Thyroid gland (tissue), 4 donors: ENCODE measurements at regions of chr1 and their contacts with region 1.

Region 1: GRCh38 chr1:9573723-9574122 is 15.0 kb upstream of the TMEM201 start:
- DNase-seq: no peak
- H3K4me3 ChIP-seq: no peak overlapping the region
- H3K27ac ChIP-seq: no peak overlapping the region
- H3K4me1 ChIP-seq: peaks cover 0 to 23% of the 10 kb centered on the region in 2 donors
- H3K27me3 ChIP-seq: no peaks in the 10 kb centered on the region
- CTCF ChIP-seq: peak in 4 of 6 experiments; percentile 18 to 72 (median 52)
- POLR2A ChIP-seq: no peak

Region 2: GRCh38 chr1:9494929-9495758 is 78.6 kb before region 1 on chr1:
- intact Hi-C with region 1: loop called (anchors 5 kb)
- DNase-seq: peak; percentile 48 to 51
- H3K4me3 ChIP-seq: no peak overlapping the region
- H3K27ac ChIP-seq: no peak overlapping the region
- H3K4me1 ChIP-seq: peaks cover 0 to 6% of the 10 kb centered on the region in 2 donors
- H3K27me3 ChIP-seq: no peaks in the 10 kb centered on the region
- CTCF ChIP-seq: peak; percentile 68 to 99 (median 96)
- POLR2A ChIP-seq: no peak